Psoas muscle (tissue), 8 donors: ENCODE measurements at regions of chr17 and their contacts with region 1.

Region 1: GRCh38 chr17:50949989-50950881 is 84.1 kb upstream of the TOB1 start:
- DNase-seq: peak; percentile 86 to 93
- ATAC-seq: peak; percentile 63 to 78 (median 73)
- H3K4me3 ChIP-seq: peak overlapping the region; percentile 48
- H3K27ac ChIP-seq: peak overlapping the region; percentile 98
- H3K4me1 ChIP-seq: peaks cover 90% of the 10 kb centered on the region
- H3K27me3 ChIP-seq: no peaks in the 10 kb centered on the region
- CTCF ChIP-seq: peak; percentile 78

Region 2: GRCh38 chr17:50853015-50853615 is 97.1 kb before region 1 on chr17:
- intact Hi-C with region 1: loop called (anchors 1 to 2 kb)
- DNase-seq: no peak
- ATAC-seq: no peak
- H3K4me3 ChIP-seq: no peak overlapping the region
- H3K27ac ChIP-seq: peak overlapping the region; percentile 95
- H3K4me1 ChIP-seq: peaks cover 49% of the 10 kb centered on the region
- H3K27me3 ChIP-seq: no peaks in the 10 kb centered on the region
- CTCF ChIP-seq: no peak

Region 3: GRCh38 chr17:50908860-50909764 is 41.1 kb before region 1 on chr17:
- intact Hi-C with region 1: no loop called
- DNase-seq: peak; percentile 57 to 72
- ATAC-seq: peak; percentile 66 to 83 (median 77)
- H3K4me3 ChIP-seq: no peak overlapping the region
- H3K27ac ChIP-seq: peak overlapping the region; percentile 63
- H3K4me1 ChIP-seq: peaks cover 28% of the 10 kb centered on the region
- H3K27me3 ChIP-seq: no peaks in the 10 kb centered on the region
- CTCF ChIP-seq: no peak

Region 4: DNA sequence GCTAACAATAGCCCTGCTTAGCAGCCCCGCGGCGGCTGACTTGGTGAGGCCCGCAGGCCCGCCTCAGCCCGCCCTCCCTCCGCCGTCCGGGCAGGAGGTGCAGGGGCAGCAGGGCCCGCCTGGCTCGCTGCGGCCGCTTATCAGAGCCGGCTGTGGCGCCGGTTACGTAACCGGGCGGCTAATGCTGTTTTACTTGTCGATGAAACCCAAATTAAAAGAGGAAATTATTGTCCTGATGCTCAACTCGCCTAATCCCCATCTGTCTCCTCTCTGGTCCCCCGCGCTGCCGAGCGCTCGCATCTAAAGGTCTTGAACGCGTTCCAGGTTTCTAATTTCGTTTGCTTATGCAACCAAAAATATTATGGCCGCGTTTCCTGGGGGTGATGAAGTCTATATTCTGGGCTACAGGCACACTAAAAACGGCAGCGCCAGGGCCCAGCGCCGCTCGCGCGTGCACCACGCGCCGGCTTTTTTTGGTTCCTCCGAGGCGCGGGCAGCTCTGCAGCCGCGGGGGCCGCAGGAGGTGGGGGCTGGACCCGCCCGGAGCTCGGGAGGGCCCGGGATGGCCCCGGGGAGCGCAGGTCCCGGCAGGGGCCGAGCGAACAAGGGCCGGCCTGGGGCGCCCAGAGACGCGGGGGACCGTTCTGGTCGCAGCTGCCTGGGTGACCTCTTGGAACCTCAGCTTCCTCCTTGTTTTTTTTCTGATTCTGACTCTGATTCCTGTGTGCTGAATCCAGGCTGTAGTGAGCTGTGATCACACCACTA is 18.9 kb before region 1 on chr17:
- intact Hi-C with region 1: loop called in 1 of 2 experiments (anchors 2 kb)
- DNase-seq: peak; percentile 88 to 94
- ATAC-seq: peak; percentile 82 to 85 (median 83)
- H3K4me3 ChIP-seq: peak overlapping the region; percentile 64
- H3K27ac ChIP-seq: peak overlapping the region; percentile 99
- H3K4me1 ChIP-seq: peaks cover 48% of the 10 kb centered on the region
- H3K27me3 ChIP-seq: no peaks in the 10 kb centered on the region
- CTCF ChIP-seq: no peak

Region 5: GRCh38 chr17:51015145-51015558 is 64.9 kb after region 1 on chr17:
- intact Hi-C with region 1: no loop called
- DNase-seq: no peak
- ATAC-seq: no peak
- H3K4me3 ChIP-seq: no peak overlapping the region
- H3K27ac ChIP-seq: no peak overlapping the region
- H3K4me1 ChIP-seq: no peaks in the 10 kb centered on the region
- H3K27me3 ChIP-seq: no peaks in the 10 kb centered on the region
- CTCF ChIP-seq: no peak